CD8-positive, alpha-beta T cell (primary cell): ENCODE measurements at regions of chr17 and their contacts with region 1.

Region 1: GRCh38 chr17:75345514-75346167 is 56.4 kb upstream of the SLC25A19 start:
- DNase-seq: peak in 8 of 9 experiments; percentile 11 to 81 (median 61)
- ATAC-seq: peak; percentile 81
- H3K4me3 ChIP-seq: peak overlapping the region; percentile 10 to 33
- H3K4me3 Mint-ChIP-seq: peak overlapping the region; percentile 72
- H3K27ac ChIP-seq: peak overlapping the region; percentile 8 to 64
- H3K27ac Mint-ChIP-seq: peak overlapping the region; percentile 93
- H3K4me1 ChIP-seq: peaks cover 82% of the 10 kb centered on the region
- H3K4me1 Mint-ChIP-seq: peaks cover 90% of the 10 kb centered on the region
- H3K27me3 ChIP-seq: no peaks in the 10 kb centered on the region
- H3K27me3 Mint-ChIP-seq: no peaks in the 10 kb centered on the region
- CTCF ChIP-seq: no peak

Region 2: DNA sequence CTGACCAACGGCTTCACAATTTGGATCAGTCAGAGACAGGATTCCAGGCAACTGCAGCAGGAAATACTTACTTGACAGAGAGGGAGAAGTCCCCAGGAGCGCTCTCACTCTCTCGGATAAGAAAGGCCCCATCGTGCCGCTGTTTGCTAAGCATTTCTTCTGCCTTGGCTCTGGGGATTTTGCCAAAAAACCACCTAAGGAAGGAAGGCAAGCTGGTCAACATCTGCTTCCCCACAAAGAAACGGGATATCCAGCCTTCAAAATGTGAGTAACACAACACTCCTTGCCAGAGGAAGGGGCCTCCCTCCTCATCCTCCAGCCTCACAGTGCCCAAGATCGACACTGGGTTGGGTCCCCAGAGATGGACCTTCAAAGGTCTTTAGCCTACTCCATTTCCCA is 19.8 kb before region 1 on chr17:
- CTCF ChIA-PET with region 1: interaction called, 21 read pairs
- POLR2A ChIA-PET with region 1: interaction called, 3 read pairs
- intact Hi-C with region 1: no loop called
- DNase-seq: no peak
- ATAC-seq: no peak
- H3K4me3 ChIP-seq: no peak overlapping the region
- H3K4me3 Mint-ChIP-seq: no peak overlapping the region
- H3K27ac ChIP-seq: no peak overlapping the region
- H3K27ac Mint-ChIP-seq: peak overlapping the region; percentile 68
- H3K4me1 ChIP-seq: peaks cover 21% of the 10 kb centered on the region
- H3K4me1 Mint-ChIP-seq: peaks cover 27% of the 10 kb centered on the region
- H3K27me3 ChIP-seq: no peaks in the 10 kb centered on the region
- H3K27me3 Mint-ChIP-seq: no peaks in the 10 kb centered on the region
- CTCF ChIP-seq: no peak

Region 3: GRCh38 chr17:75380315-75380714 is 34.7 kb after region 1 on chr17:
- CTCF ChIA-PET with region 1: no interaction called
- POLR2A ChIA-PET with region 1: interaction called, 4 read pairs
- intact Hi-C with region 1: loop called in 1 of 2 experiments (anchors 5 kb)
- DNase-seq: no peak
- ATAC-seq: no peak
- H3K4me3 ChIP-seq: no peak overlapping the region
- H3K4me3 Mint-ChIP-seq: no peak overlapping the region
- H3K27ac ChIP-seq: no peak overlapping the region
- H3K27ac Mint-ChIP-seq: peak overlapping the region; percentile 28
- H3K4me1 ChIP-seq: peaks cover 19% of the 10 kb centered on the region
- H3K4me1 Mint-ChIP-seq: peaks cover 61% of the 10 kb centered on the region
- H3K27me3 ChIP-seq: no peaks in the 10 kb centered on the region
- H3K27me3 Mint-ChIP-seq: no peaks in the 10 kb centered on the region
- CTCF ChIP-seq: no peak

Region 4: DNA sequence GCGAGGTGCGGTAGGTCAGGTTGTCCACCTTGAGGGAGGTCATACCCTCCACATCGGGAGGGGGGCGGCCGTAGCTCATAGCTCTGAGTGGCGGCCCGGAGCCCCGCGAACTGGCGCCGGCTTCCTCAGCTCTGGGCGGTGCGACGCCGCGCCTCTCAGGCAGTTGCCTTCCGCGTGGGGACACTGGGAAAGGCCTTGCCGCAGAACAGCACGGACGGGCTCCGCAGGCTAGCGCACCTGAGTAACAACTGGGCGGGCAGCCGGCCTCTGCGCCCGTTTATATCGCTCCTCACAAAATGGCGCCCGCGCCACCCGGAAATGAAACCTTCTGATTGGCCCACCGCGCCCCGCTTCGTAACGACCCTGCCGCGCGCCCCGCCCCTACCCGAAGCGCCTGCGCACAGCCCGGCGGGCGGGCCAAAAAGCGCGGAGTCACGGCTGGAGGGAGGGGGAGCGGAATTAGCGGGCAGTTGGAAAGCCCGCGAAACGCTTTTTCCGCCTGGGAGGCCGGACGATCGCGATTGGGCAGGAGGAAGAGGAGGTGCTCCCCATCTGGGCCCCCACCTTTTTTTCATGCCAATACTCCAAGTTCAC is 1391.5 kb after region 1 on chr17 and contains the start of gene SRSF2:
- CTCF ChIA-PET with region 1: no interaction called
- POLR2A ChIA-PET with region 1: no interaction called
- intact Hi-C with region 1: no loop called
- DNase-seq: peak; percentile 96 to 99 (median 98)
- ATAC-seq: peak; percentile 79
- H3K4me3 ChIP-seq: peak within 1 kb of the TSS; percentile 88 to 100
- H3K4me3 Mint-ChIP-seq: peak within 1 kb of the TSS; percentile 96
- H3K27ac ChIP-seq: peak within 1 kb of the TSS; percentile 93 to 99
- H3K27ac Mint-ChIP-seq: peak within 1 kb of the TSS; percentile 97
- H3K4me1 ChIP-seq: peaks cover 44% of the 10 kb centered on the region
- H3K4me1 Mint-ChIP-seq: peaks cover 59% of the 10 kb centered on the region
- H3K27me3 ChIP-seq: no peaks in the 10 kb centered on the region
- H3K27me3 Mint-ChIP-seq: no peaks in the 10 kb centered on the region
- CTCF ChIP-seq: no peak
- total RNA-seq, gene SRSF2: 621 to 637 TPM